HAP-1 (cell line): ENCODE measurements at regions of chr20 and their contacts with region 1.

Region 1: DNA sequence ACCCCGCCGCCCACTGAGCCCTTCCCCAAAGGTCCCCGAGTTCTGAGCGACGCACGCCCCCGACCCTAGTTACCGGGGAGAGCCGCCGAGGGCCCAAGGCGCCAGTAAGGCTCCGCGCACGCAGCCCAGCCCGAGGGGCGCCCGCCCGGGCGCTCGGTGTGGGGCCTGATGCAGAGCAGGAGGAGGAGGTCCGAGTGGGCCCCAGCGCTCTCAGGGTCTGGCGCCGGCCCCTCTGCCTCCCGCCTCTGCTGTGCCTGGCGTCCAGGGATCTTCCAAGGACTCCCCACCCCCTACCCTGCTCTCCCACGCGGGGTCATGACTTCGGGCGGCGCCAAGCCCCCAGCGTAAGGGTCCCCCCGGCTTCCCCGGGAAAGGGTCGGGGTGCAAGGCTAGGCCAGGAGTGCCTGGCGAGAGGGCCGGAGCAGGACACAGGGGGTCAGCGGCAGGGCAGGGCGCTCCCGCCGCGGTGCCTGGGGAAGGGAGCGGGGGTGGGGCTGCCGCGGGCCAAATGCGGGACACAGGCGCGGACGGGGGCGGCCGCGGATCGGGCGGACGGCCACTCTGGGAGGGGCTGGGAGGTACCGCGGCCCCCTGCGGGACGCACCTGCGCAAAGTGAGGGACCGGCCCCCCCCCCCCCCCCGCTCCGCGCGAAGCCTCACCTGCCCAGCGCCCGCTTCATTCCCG is 640 bp downstream of the ABHD12 start:
- DNase-seq: peak in 1 of 2 experiments; percentile 52
- H3K4me3 ChIP-seq: peak overlapping the region; percentile 94
- H3K4me1 ChIP-seq: peaks cover 4% of the 10 kb centered on the region
- H3K27me3 ChIP-seq: no peaks in the 10 kb centered on the region

Region 2: GRCh38 chr20:25319241-25320034 is 70.6 kb before region 1 on chr20:
- in situ Hi-C with region 1: loop called (anchors 10 kb)
- DNase-seq: peak in 1 of 2 experiments; percentile 4
- H3K4me3 ChIP-seq: no peak overlapping the region
- H3K4me1 ChIP-seq: no peaks in the 10 kb centered on the region
- H3K27me3 ChIP-seq: no peaks in the 10 kb centered on the region

Region 3: DNA sequence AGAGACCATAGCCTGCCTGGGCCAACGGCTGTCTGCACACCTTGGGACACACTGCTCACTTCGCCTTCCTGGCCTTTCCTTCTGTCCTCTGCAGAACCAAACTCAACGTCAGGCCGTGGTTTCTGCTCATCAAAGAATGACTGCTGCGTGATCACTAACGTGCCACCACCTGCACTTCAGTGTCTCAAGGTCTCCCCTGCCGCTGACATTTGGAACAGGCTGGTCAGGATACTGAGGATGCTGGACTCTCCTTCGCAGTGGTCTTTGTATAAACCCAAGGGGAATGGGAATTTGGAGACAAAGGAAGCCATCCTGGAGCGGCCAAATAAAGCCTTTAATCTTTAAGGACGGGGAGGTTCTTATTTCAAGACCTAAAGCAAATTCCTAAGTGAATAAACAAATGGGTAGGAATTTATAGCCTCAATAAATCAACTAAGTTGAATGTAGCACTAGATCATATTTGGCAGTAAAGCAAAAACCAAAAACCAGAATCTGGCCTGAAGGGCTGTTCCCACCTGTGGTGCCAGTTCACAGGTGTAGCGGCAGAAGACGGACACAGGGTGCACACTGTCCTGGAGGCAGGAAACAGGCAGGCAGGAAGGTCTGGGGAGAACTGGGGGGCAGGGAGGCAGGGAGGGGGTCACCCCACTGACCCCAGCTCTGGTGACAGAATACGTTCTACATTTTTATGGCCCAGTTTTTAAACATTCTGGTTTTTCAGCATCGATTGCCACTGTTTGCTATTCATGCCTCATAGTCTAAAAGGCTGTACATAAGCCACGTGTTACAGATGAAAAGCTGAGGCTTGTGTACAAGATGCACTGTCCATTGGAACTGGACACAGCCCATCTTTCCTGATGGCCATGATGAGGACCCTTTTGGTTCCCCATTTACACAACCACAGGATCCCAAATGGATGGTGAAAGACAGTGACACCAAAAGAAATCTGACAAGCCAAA is 36.0 kb before region 1 on chr20:
- in situ Hi-C with region 1: loop called (anchors 5 kb)
- DNase-seq: peak; percentile 50 to 68
- H3K4me3 ChIP-seq: no peak overlapping the region
- H3K4me1 ChIP-seq: peaks cover 32% of the 10 kb centered on the region
- H3K27me3 ChIP-seq: no peaks in the 10 kb centered on the region

Region 4: DNA sequence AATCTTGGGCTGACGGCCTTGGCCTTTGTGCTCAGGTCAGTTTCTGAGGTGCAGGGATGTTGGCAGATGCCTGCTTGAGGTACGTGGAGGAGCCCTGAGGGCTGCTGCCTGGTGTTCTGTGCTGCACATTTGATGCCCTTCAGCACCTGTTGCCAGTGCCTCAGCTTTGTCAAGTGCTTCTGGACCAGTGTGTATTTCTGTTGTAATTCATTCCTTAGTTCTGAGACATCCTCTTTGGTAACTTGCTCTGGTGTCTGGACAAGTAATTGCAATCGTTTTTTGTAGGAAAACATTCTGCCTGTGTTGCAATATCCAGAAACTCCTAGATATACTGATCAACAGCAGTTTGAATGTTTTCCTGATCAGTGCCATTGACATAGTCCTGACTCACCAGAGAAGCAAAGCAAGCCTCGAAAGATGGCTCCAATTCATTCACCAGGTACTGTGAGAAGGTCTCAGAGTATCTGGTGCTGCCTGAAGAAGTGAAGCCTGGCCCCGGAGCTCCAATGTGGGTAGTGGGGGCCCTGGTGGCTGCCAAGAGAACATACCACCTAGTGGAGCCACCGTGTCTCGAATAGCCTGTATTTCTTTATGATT is 279.9 kb after region 1 on chr20:
- in situ Hi-C with region 1: no loop called
- DNase-seq: peak in 1 of 2 experiments; percentile 29
- H3K4me3 ChIP-seq: no peak overlapping the region
- H3K4me1 ChIP-seq: peaks cover 20% of the 10 kb centered on the region
- H3K27me3 ChIP-seq: no peaks in the 10 kb centered on the region